Activated CD4-positive, alpha-beta T cell treated with anti-CD3 and anti-CD28 coated beads for 36 hours (primary cell): ENCODE measurements at regions of chr9 and their contacts with region 1.

Region 1: GRCh38 chr9:589723-590122 is 251.8 kb upstream of the DMRT1 start:
- DNase-seq: no peak
- ATAC-seq: no peak
- H3K4me3 Mint-ChIP-seq: no peak overlapping the region
- H3K27ac Mint-ChIP-seq: no peak overlapping the region
- H3K4me1 Mint-ChIP-seq: peaks cover 3% of the 10 kb centered on the region
- H3K27me3 Mint-ChIP-seq: no peaks in the 10 kb centered on the region

Region 2: GRCh38 chr9:567128-567746 is 22.5 kb before region 1 on chr9:
- CTCF ChIA-PET with region 1: no interaction called
- POLR2A ChIA-PET with region 1: no interaction called
- intact Hi-C with region 1: no loop called
- DNase-seq: no peak
- ATAC-seq: no peak
- H3K4me3 Mint-ChIP-seq: no peak overlapping the region
- H3K27ac Mint-ChIP-seq: no peak overlapping the region
- H3K4me1 Mint-ChIP-seq: no peaks in the 10 kb centered on the region
- H3K27me3 Mint-ChIP-seq: peaks cover 12% of the 10 kb centered on the region

Region 3: GRCh38 chr9:650362-650761 is 60.6 kb after region 1 on chr9:
- CTCF ChIA-PET with region 1: no interaction called
- POLR2A ChIA-PET with region 1: no interaction called
- intact Hi-C with region 1: loop called in 1 of 2 experiments (anchors 10 kb)
- DNase-seq: peak; percentile 18
- ATAC-seq: peak; percentile 36
- H3K4me3 Mint-ChIP-seq: peak overlapping the region; percentile 1
- H3K27ac Mint-ChIP-seq: peak overlapping the region; percentile 15
- H3K4me1 Mint-ChIP-seq: peaks cover 15% of the 10 kb centered on the region
- H3K27me3 Mint-ChIP-seq: no peaks in the 10 kb centered on the region